HCT116 (cell line): ENCODE measurements at regions of chrX and their contacts with region 1.

Region 1: GRCh38 chrX:23782863-23783568 is at the start of gene SAT1:
- DNase-seq: peak; percentile 86
- ATAC-seq: peak; percentile 89
- H3K4me3 ChIP-seq: peak within 1 kb of the TSS; percentile 72 to 74
- H3K27ac ChIP-seq: peak within 1 kb of the TSS; percentile 90
- H3K4me1 ChIP-seq: peaks cover 26 to 61% of the 10 kb centered on the region in 2 experiments
- H3K27me3 ChIP-seq: no peaks in the 10 kb centered on the region
- CTCF ChIP-seq: peak in 2 of 3 experiments; percentile 57 to 66; a peak in 4 of 6 replicates
- POLR2A ChIP-seq: peak; percentile 98
- RAD21 ChIP-seq: no peak
- total RNA-seq, gene SAT1: 821 TPM

Region 2: GRCh38 chrX:23483396-23483795 is 299.6 kb before region 1 on chrX:
- CTCF ChIA-PET with region 1: no interaction called
- POLR2A ChIA-PET with region 1: no interaction called
- RAD21 ChIA-PET with region 1: no interaction called
- intact Hi-C with region 1: no loop called
- DNase-seq: no peak
- ATAC-seq: no peak
- H3K4me3 ChIP-seq: no peak overlapping the region
- H3K27ac ChIP-seq: no peak overlapping the region
- H3K4me1 ChIP-seq: no peaks in the 10 kb centered on the region
- H3K27me3 ChIP-seq: no peaks in the 10 kb centered on the region
- CTCF ChIP-seq: no peak
- POLR2A ChIP-seq: no peak
- RAD21 ChIP-seq: no peak

Region 3: DNA sequence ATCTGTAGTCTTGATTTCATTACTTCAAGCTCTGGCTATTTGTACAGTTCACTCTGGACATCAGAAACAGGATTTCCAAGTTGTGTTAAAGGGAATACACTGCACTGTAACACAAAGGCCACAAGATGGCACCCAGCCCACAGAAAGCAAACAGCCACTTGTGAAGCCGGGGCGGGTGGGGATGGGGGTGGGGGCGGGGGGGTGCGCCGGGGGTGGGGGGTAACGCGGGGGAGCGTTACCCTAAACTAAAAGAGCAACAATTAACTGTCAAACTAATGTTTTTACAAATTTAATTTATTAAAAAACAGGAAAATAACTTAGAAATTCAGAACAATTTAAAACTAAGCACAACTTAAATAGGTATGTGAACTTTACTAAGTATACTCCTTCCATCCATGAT is 88.4 kb before region 1 on chrX:
- CTCF ChIA-PET with region 1: no interaction called
- POLR2A ChIA-PET with region 1: no interaction called
- RAD21 ChIA-PET with region 1: no interaction called
- intact Hi-C with region 1: loop called (anchors 2 kb)
- DNase-seq: peak; percentile 21
- ATAC-seq: peak; percentile 82
- H3K4me3 ChIP-seq: no peak overlapping the region
- H3K27ac ChIP-seq: no peak overlapping the region
- H3K4me1 ChIP-seq: no peaks in the 10 kb centered on the region
- H3K27me3 ChIP-seq: no peaks in the 10 kb centered on the region
- CTCF ChIP-seq: peak; percentile 21 to 49 (median 44); a peak in 3 of 6 replicates
- POLR2A ChIP-seq: no peak
- RAD21 ChIP-seq: peak; percentile 65

Region 4: DNA sequence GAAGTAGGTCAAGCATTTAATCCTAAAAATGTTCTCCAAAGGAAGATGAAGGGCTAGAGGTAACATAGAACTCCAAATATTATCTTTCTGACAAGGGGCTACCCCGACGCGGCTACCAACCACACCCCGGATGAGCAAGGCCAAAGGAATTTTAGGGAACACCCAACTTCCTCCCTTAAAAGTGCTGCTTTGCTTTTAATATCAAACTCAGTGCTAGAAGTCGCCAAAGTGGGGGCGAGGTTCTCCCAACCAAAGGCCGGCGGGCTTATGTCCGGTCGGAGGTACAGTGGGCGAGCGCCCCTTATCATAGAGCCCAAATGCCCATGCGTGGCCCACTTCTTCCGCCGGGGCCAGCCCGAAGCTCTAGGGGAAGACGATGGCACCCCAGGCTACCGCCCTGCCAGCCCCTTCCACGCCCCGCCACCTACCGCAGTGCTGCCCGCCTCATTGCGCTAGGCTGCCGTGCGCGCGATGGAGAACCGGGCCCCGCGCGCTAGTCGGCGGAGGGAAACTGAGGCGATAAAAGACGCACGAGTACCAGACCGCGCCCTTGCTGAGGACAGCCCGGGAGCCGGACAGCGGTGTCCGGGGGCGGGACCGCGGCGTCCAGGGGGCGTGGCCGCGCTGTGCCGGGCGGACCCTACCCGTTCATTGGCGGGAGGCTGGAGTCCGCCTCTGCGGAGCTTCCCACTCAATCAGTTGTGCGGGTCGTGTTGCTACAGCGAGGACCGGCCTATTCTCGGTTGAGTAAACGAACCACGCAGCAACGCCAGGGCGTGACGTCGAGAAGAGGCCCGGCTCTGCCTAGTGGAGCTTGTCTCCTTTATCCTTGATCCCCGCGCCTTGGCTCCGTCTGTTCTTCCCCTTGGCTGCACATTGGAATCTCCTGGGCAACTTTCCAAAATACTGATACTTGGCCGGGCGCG is 40.1 kb before region 1 on chrX and contains the start of gene ACOT9:
- CTCF ChIA-PET with region 1: no interaction called
- POLR2A ChIA-PET with region 1: interaction called, 12 read pairs
- RAD21 ChIA-PET with region 1: no interaction called
- intact Hi-C with region 1: no loop called
- DNase-seq: peak; percentile 87
- ATAC-seq: peak; percentile 95
- H3K4me3 ChIP-seq: peak within 1 kb of the TSS; percentile 66 to 75
- H3K27ac ChIP-seq: peak within 1 kb of the TSS; percentile 90
- H3K4me1 ChIP-seq: peaks cover 0 to 12% of the 10 kb centered on the region in 2 experiments; a peak in 3 of 4 replicates
- H3K27me3 ChIP-seq: no peaks in the 10 kb centered on the region
- CTCF ChIP-seq: no peak
- POLR2A ChIP-seq: peak; percentile 40
- RAD21 ChIP-seq: no peak
- total RNA-seq, gene ACOT9: 59.7 TPM

Region 5: DNA sequence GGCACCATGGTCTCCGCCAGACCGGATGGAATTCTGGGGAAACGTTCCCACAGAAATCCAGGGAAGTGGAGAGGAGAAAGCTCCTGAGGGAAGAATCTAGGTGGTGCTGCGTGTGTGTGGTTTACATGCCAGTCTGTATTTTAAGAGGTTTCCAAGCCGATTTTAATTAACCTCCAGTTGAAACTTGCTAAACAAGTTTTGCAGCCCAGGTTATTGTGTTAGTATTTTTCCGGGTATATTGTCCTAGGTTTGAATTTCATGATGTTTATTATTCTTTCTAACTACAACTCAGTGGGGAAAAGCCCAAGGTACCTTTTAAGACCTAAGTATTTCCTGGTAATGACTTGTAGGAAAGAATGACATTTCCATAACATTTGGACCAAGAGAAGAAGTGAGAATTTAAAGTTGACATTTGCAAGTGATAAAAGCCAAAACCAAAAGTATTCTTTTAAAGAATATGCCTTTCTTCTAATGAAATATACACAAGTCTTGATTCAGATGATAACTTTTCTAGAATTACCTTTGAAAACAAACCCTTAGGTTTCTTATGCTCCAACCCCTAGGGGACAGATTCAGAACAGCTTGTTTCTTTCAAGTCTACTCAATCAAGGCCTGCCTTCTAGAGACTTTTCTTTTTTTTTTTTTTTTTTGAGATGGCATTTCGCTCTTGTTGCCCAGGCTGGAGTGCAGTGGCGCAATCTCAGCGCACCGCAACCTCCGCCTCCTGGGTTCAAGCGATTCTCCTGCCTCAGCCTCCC is 14.5 kb after region 1 on chrX:
- CTCF ChIA-PET with region 1: no interaction called
- POLR2A ChIA-PET with region 1: interaction called, 17 read pairs
- RAD21 ChIA-PET with region 1: no interaction called
- intact Hi-C with region 1: no loop called
- DNase-seq: no peak
- ATAC-seq: peak; percentile 73
- H3K4me3 ChIP-seq: no peak overlapping the region; a peak in 1 of 4 replicates
- H3K27ac ChIP-seq: peak overlapping the region; percentile 78
- H3K4me1 ChIP-seq: peaks cover 40 to 52% of the 10 kb centered on the region in 2 experiments
- H3K27me3 ChIP-seq: no peaks in the 10 kb centered on the region
- CTCF ChIP-seq: peak in 2 of 3 experiments; percentile 6 to 11; a peak in 1 of 6 replicates
- POLR2A ChIP-seq: no peak
- RAD21 ChIP-seq: peak; percentile 14; the same call in 1 of the 2 replicates

Region 6: DNA sequence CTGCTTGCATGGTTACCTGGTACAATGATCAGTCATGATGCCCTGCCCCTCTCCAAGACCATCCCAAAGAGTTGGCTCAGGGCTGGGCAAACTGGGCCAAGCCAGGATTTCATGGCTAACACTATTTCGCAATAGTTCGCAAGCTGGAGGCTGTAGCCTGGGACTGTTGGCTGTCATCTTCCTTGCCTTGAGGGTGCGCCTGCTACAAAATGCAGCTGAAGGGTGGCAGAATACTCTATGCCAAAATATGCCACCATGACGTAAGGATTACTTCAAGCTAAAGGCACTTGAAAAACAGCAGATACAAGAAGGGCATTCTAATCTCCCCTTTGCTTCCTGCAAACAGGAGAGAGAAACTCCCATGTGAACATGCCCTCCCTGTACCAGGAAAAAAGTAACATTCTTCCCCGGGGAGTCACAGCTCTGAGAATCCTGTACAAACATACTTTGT is 20.9 kb after region 1 on chrX:
- CTCF ChIA-PET with region 1: interaction called, 3 read pairs
- POLR2A ChIA-PET with region 1: interaction called, 25 read pairs
- RAD21 ChIA-PET with region 1: no interaction called
- intact Hi-C with region 1: loop called (anchors 2 kb)
- DNase-seq: no peak
- ATAC-seq: no peak
- H3K4me3 ChIP-seq: no peak overlapping the region
- H3K27ac ChIP-seq: peak overlapping the region; percentile 61
- H3K4me1 ChIP-seq: peaks cover 45 to 52% of the 10 kb centered on the region in 2 experiments
- H3K27me3 ChIP-seq: no peaks in the 10 kb centered on the region
- CTCF ChIP-seq: no peak
- POLR2A ChIP-seq: no peak
- RAD21 ChIP-seq: no peak

Region 7: DNA sequence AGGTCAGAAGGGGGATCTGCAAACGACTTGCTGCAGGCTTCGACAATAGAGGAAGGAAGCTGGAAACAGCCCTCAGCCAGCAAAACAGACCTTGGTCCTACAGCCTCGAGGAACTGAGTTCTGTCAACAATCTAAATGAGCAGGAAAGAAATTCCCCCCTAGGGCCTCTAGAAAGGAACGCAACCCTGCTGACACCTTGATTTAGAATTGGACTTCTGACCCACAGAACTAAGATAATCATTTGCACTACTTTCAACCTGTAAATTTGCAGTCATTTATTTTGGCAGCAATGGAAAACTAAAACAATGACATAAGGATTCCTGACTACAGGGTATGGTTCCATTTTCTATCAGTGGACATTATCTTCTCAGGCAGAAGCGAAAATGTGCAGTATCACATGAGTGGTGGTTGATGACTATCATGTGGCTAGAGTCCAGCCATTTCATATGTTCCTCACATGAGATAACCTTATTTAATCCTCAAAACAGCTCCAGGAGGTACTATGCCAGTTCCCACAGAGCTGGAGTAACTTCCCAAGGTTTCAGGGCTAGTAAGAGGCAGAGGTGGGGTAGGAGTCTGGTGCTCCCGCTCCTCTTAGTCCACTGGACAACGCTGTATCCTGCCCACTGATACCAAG is 61.6 kb after region 1 on chrX:
- CTCF ChIA-PET with region 1: no interaction called
- POLR2A ChIA-PET with region 1: no interaction called
- RAD21 ChIA-PET with region 1: no interaction called
- intact Hi-C with region 1: no loop called
- DNase-seq: no peak
- ATAC-seq: no peak
- H3K4me3 ChIP-seq: no peak overlapping the region
- H3K27ac ChIP-seq: no peak overlapping the region
- H3K4me1 ChIP-seq: peaks cover 0 to 4% of the 10 kb centered on the region in 2 experiments; a peak in 1 of 4 replicates
- H3K27me3 ChIP-seq: no peaks in the 10 kb centered on the region
- CTCF ChIP-seq: no peak
- POLR2A ChIP-seq: no peak
- RAD21 ChIP-seq: no peak

Region 8: GRCh38 chrX:23888887-23889501 is 106.0 kb after region 1 on chrX:
- CTCF ChIA-PET with region 1: no interaction called
- POLR2A ChIA-PET with region 1: interaction called, 14 read pairs
- RAD21 ChIA-PET with region 1: interaction called in 1 of 2 experiments, 4 read pairs
- intact Hi-C with region 1: no loop called
- DNase-seq: no peak
- ATAC-seq: peak; percentile 50
- H3K4me3 ChIP-seq: peak overlapping the region in 1 of 2 experiments; percentile 26; a peak in 1 of 4 replicates
- H3K27ac ChIP-seq: peak overlapping the region; percentile 75
- H3K4me1 ChIP-seq: peaks cover 52 to 67% of the 10 kb centered on the region in 2 experiments
- H3K27me3 ChIP-seq: no peaks in the 10 kb centered on the region
- CTCF ChIP-seq: no peak
- POLR2A ChIP-seq: no peak
- RAD21 ChIP-seq: no peak

Region 9: GRCh38 chrX:23901805-23902204 is 118.8 kb after region 1 on chrX:
- CTCF ChIA-PET with region 1: interaction called, 36 read pairs
- POLR2A ChIA-PET with region 1: interaction called, 75 read pairs
- RAD21 ChIA-PET with region 1: interaction called, 4 to 5 read pairs
- intact Hi-C with region 1: loop called (anchors 1 kb)
- DNase-seq: peak; percentile 67
- ATAC-seq: peak; percentile 78
- H3K4me3 ChIP-seq: no peak overlapping the region
- H3K27ac ChIP-seq: peak overlapping the region; percentile 81
- H3K4me1 ChIP-seq: peaks cover 49 to 65% of the 10 kb centered on the region in 2 experiments
- H3K27me3 ChIP-seq: no peaks in the 10 kb centered on the region
- CTCF ChIP-seq: peak in 2 of 3 experiments; percentile 47 to 48; a peak in 3 of 6 replicates
- POLR2A ChIP-seq: no peak
- RAD21 ChIP-seq: no peak

Region 10: GRCh38 chrX:24097741-24098260 is 314.8 kb after region 1 on chrX:
- CTCF ChIA-PET with region 1: no interaction called
- POLR2A ChIA-PET with region 1: no interaction called
- RAD21 ChIA-PET with region 1: no interaction called
- intact Hi-C with region 1: no loop called
- DNase-seq: no peak
- ATAC-seq: no peak
- H3K4me3 ChIP-seq: no peak overlapping the region
- H3K27ac ChIP-seq: no peak overlapping the region
- H3K4me1 ChIP-seq: no peaks in the 10 kb centered on the region
- H3K27me3 ChIP-seq: no peaks in the 10 kb centered on the region
- CTCF ChIP-seq: no peak
- POLR2A ChIP-seq: no peak
- RAD21 ChIP-seq: no peak

Region 11: GRCh38 chrX:24395775-24396174 is 612.8 kb after region 1 on chrX:
- CTCF ChIA-PET with region 1: no interaction called
- POLR2A ChIA-PET with region 1: no interaction called
- RAD21 ChIA-PET with region 1: no interaction called
- intact Hi-C with region 1: no loop called
- DNase-seq: peak; percentile 24
- ATAC-seq: peak; percentile 75
- H3K4me3 ChIP-seq: no peak overlapping the region
- H3K27ac ChIP-seq: no peak overlapping the region
- H3K4me1 ChIP-seq: no peaks in the 10 kb centered on the region
- H3K27me3 ChIP-seq: peaks cover 2% of the 10 kb centered on the region; the same call in 1 of the 2 replicates
- CTCF ChIP-seq: peak; percentile 45 to 65 (median 60); a peak in 4 of 6 replicates
- POLR2A ChIP-seq: no peak
- RAD21 ChIP-seq: peak; percentile 84